PC-3 (cell line): ENCODE measurements at regions of chr13 and their contacts with region 1.

Region 1: DNA sequence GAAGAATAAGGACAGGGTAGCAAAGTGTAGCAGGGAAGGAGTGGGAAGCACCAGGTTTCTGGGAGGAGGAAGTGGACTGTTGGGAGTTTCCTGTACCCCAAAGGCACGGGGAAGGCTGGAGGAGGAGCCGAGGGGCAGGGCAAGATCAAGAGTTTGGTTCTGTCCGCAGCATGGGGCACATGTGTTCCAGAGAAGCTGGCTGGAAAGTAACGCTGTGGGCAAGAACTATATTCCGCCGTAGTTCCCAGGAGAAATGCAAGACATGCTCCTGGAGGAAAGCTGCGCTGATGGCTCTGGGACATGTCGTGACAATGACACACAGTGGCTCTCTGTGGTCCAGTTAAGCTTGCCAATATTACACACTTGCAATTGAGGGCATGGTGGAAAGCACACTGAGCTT is 51.7 kb upstream of the KPNA3 start:
- DNase-seq: no peak
- ATAC-seq: no peak
- H3K4me3 ChIP-seq: no peak overlapping the region
- H3K27ac ChIP-seq: no peak overlapping the region
- H3K4me1 ChIP-seq: no peaks in the 10 kb centered on the region
- H3K27me3 ChIP-seq: no peaks in the 10 kb centered on the region
- CTCF ChIP-seq: no peak

Region 2: GRCh38 chr13:49652355-49653305 is 191.6 kb before region 1 on chr13:
- CTCF ChIA-PET with region 1: no interaction called
- POLR2A ChIA-PET with region 1: no interaction called
- intact Hi-C with region 1: loop called (anchors 1 kb)
- DNase-seq: peak; percentile 63
- ATAC-seq: peak; percentile 55
- H3K4me3 ChIP-seq: no peak overlapping the region
- H3K27ac ChIP-seq: no peak overlapping the region
- H3K4me1 ChIP-seq: peaks cover 25% of the 10 kb centered on the region
- H3K27me3 ChIP-seq: no peaks in the 10 kb centered on the region
- CTCF ChIP-seq: peak; percentile 65

Region 3: DNA sequence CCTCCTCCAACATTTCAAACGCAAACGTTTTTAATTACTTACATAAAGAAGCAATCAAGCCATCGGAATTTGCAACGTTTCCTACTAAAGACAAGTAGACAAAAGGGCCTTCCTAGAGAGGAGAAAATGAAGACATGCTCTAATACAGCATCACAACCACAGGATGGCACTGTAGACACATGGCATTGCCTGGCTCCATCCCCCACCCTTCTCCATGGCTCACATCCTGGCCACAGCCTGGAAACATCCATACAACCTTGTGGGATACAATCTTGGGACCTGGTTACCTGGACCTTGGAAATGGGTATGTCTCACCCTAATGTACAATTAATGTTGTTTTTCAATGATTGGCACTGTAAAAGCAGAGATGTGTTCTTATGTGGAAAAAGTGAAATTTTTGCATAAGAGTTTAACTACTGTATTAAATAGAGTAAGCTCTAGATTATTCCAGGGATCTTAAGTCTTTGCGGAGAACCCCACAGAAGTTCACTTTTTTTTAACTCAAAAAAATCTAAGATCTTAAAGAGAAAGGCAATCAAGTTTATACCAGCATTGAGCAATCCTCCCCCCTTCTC is 174.4 kb before region 1 on chr13:
- CTCF ChIA-PET with region 1: no interaction called
- POLR2A ChIA-PET with region 1: no interaction called
- intact Hi-C with region 1: loop called (anchors 1 kb)
- DNase-seq: peak; percentile 68
- ATAC-seq: peak; percentile 88
- H3K4me3 ChIP-seq: no peak overlapping the region
- H3K27ac ChIP-seq: no peak overlapping the region
- H3K4me1 ChIP-seq: peaks cover 6% of the 10 kb centered on the region; the same call in 1 of the 2 replicates
- H3K27me3 ChIP-seq: no peaks in the 10 kb centered on the region
- CTCF ChIP-seq: peak; percentile 75